CD14-positive monocyte (primary cell): ENCODE measurements at regions of chr20 and their contacts with region 1.

Region 1: GRCh38 chr20:56043227-56043626 is 37.9 kb upstream of the CBLN4 start:
- DNase-seq: no peak
- H3K4me3 ChIP-seq: no peak overlapping the region
- H3K4me3 Mint-ChIP-seq: no peak overlapping the region
- H3K27ac ChIP-seq: no peak overlapping the region
- H3K27ac Mint-ChIP-seq: no peak overlapping the region
- H3K4me1 ChIP-seq: no peaks in the 10 kb centered on the region
- H3K4me1 Mint-ChIP-seq: no peaks in the 10 kb centered on the region
- H3K27me3 ChIP-seq: no peaks in the 10 kb centered on the region
- H3K27me3 Mint-ChIP-seq: no peaks in the 10 kb centered on the region
- CTCF ChIP-seq: no peak

Region 2: DNA sequence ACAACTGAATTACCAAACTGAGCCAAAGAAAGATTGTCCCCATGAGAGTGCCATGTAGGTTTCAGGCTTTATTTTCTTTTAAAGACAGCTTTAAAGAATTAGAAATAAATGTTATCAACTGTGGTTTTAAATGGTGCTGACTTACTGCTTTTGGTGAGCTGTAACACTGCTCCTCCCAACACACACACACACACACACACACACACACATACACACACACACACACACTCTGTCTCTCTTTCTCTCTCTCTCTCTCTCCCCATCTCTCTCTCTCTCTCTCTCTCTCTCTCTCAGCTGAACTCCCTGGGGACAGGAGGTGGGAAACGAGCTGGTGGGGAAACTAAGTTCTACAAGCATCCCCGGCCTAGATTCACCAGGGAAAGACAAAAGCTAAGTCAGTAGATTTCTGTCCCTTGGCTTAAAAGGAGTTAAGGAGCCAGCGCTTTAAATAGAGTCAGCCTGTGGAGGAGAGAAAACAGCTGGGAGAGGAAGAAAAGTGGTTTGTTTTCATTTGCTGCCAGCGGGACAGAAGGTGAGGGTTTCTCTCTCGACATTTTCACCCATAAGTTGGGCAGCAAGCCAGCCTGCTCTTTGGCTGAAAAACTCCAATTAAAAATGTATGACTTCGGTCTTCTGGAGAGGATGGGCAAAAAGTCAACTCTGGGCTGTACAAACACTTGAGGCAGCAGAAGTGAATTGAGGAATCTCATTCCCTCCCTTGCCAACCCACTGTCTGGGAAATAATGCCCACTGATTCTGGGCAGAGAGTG is 65.4 kb before region 1 on chr20:
- intact Hi-C with region 1: loop called in 1 of 2 experiments (anchors 10 kb)
- DNase-seq: no peak
- H3K4me3 ChIP-seq: no peak overlapping the region
- H3K4me3 Mint-ChIP-seq: no peak overlapping the region
- H3K27ac ChIP-seq: no peak overlapping the region
- H3K27ac Mint-ChIP-seq: no peak overlapping the region
- H3K4me1 ChIP-seq: no peaks in the 10 kb centered on the region
- H3K4me1 Mint-ChIP-seq: no peaks in the 10 kb centered on the region
- H3K27me3 ChIP-seq: no peaks in the 10 kb centered on the region
- H3K27me3 Mint-ChIP-seq: no peaks in the 10 kb centered on the region
- CTCF ChIP-seq: no peak

Region 3: DNA sequence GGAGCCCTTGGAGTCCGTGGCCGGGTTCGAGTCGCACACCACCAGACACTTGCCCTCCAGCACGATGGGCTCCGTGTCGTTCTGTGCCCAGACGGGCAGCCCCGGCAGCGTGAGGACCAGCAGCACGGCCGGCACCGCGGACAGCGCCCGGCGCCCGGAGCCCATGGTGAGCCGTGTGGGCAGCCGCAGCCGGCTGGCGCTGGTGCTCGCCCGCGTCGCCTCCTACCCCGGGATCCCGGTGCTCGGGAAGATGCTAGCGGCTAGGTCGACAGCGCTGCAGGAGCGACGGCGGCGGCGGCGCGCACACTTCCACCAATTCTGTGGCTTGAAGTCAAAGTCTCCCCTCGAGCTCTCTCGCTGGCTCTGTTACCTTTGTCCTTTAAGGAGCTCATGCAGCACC is 39.2 kb before region 1 on chr20:
- intact Hi-C with region 1: no loop called
- DNase-seq: no peak
- H3K4me3 ChIP-seq: no peak overlapping the region
- H3K4me3 Mint-ChIP-seq: peak overlapping the region in 1 of 2 donors; percentile 80
- H3K27ac ChIP-seq: no peak overlapping the region
- H3K27ac Mint-ChIP-seq: no peak overlapping the region
- H3K4me1 ChIP-seq: no peaks in the 10 kb centered on the region
- H3K4me1 Mint-ChIP-seq: no peaks in the 10 kb centered on the region
- H3K27me3 ChIP-seq: peaks cover 11 to 49% of the 10 kb centered on the region in 2 donors
- H3K27me3 Mint-ChIP-seq: peaks cover 30 to 48% (median 41%) of the 10 kb centered on the region in 3 donors
- CTCF ChIP-seq: no peak

Region 4: DNA sequence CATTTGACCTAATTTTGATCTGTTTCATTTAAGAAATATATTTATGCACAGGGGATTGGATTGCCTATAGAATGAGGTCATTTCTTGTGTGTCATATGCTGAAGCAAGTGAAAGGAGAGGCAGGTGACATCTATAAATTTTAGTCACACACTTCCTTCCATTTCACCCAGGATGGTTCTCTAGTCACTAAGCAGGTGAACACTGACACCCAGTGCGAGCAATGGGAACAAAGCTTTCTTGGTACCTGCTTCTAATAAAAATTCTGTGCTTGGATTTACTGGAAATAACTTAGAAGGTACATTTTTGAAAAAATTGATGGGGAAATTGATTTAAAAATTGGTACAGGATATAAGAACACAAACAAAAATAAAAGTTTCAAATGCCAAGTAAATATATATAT is 138.4 kb after region 1 on chr20:
- intact Hi-C with region 1: no loop called
- DNase-seq: no peak
- H3K4me3 ChIP-seq: no peak overlapping the region
- H3K4me3 Mint-ChIP-seq: no peak overlapping the region
- H3K27ac ChIP-seq: no peak overlapping the region
- H3K27ac Mint-ChIP-seq: no peak overlapping the region
- H3K4me1 ChIP-seq: no peaks in the 10 kb centered on the region
- H3K4me1 Mint-ChIP-seq: no peaks in the 10 kb centered on the region
- H3K27me3 ChIP-seq: no peaks in the 10 kb centered on the region
- H3K27me3 Mint-ChIP-seq: peaks cover 1 to 4% (median 3%) of the 10 kb centered on the region in 3 donors
- CTCF ChIP-seq: no peak